Endothelial cell of umbilical vein (primary cell): ENCODE measurements at regions of chr14 and their contacts with region 1.

Region 1: DNA sequence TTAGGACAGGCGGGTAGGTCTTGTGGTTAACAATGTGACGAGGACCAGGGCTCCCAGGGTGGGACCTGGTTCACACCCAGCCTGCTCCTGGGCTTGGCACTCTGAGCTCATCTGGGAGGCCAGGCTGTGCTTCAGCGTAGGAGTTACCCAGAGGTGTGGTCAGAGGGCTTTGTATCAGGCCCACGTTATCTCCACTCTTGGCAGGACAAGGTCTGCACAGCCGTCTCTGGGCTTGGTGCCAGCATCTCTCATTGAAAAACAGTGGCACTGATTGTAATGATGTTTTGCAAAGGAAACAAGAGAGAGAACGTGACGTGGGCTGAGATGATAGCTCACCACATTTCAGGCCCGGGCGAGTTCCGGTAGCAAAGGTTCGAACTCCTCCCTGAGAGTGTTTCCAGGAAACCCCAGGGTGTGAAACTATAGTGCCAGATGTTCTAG is 227.1 kb downstream of the KTN1 start:
- DNase-seq: peak; percentile 98
- H3K4me3 ChIP-seq: no peak overlapping the region
- H3K27ac ChIP-seq: peak overlapping the region; percentile 82
- H3K4me1 ChIP-seq: peaks cover 33% of the 10 kb centered on the region
- H3K27me3 ChIP-seq: no peaks in the 10 kb centered on the region
- CTCF ChIP-seq: no peak
- POLR2A ChIP-seq: no peak

Region 2: DNA sequence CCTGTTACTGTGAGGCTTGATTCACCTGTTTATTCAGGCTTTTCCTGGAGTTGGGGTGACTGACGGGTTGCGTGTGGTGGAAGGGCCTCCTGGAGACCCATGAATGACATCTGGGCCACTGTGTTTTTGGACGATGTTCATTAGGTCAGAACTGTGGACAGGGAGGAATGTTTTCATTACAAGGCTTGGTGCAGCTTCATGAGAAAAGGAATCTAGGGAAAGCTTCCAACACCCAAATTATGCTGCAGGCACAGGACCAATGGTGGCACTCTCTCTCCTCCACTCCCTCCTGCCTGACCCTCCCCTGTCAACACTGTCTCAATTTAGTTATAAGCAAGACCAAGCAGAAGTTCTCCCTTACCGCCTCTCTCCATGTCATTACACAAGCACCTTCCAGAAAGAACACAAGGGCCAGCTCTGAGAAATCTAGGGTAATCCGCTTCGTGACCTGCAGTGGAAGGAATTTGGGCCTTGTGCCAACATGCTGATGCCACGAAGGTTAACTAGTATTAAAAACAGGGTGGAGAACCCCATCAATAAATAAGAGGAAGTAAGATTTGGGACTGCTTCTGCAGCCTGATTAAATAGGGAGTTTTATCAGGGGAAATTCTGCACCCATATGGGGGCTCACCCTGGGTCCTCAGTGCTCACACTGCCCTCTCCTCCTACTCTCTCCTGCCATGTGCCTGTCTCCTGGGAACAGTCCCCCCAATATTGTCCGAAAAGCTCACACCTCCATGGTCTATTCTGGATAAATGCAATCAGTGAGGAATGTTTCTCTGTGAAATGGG is 26.7 kb before region 1 on chr14:
- CTCF ChIA-PET with region 1: interaction called, 7 read pairs
- POLR2A ChIA-PET with region 1: no interaction called
- dilution Hi-C with region 1: no loop called
- intact Hi-C with region 1: loop called (anchors 2 kb)
- DNase-seq: peak; percentile 95
- H3K4me3 ChIP-seq: no peak overlapping the region
- H3K27ac ChIP-seq: peak overlapping the region; percentile 44
- H3K4me1 ChIP-seq: peaks cover 18% of the 10 kb centered on the region
- H3K27me3 ChIP-seq: no peaks in the 10 kb centered on the region
- CTCF ChIP-seq: no peak
- POLR2A ChIP-seq: peak; percentile 51

Region 3: GRCh38 chr14:55889124-55889523 is 82.0 kb after region 1 on chr14:
- CTCF ChIA-PET with region 1: no interaction called
- POLR2A ChIA-PET with region 1: no interaction called
- dilution Hi-C with region 1: no loop called
- intact Hi-C with region 1: no loop called
- DNase-seq: no peak
- H3K4me3 ChIP-seq: no peak overlapping the region
- H3K27ac ChIP-seq: no peak overlapping the region
- H3K4me1 ChIP-seq: no peaks in the 10 kb centered on the region
- H3K27me3 ChIP-seq: peaks cover 12 to 15% of the 10 kb centered on the region in 2 experiments
- CTCF ChIP-seq: no peak
- POLR2A ChIP-seq: no peak

Region 4: DNA sequence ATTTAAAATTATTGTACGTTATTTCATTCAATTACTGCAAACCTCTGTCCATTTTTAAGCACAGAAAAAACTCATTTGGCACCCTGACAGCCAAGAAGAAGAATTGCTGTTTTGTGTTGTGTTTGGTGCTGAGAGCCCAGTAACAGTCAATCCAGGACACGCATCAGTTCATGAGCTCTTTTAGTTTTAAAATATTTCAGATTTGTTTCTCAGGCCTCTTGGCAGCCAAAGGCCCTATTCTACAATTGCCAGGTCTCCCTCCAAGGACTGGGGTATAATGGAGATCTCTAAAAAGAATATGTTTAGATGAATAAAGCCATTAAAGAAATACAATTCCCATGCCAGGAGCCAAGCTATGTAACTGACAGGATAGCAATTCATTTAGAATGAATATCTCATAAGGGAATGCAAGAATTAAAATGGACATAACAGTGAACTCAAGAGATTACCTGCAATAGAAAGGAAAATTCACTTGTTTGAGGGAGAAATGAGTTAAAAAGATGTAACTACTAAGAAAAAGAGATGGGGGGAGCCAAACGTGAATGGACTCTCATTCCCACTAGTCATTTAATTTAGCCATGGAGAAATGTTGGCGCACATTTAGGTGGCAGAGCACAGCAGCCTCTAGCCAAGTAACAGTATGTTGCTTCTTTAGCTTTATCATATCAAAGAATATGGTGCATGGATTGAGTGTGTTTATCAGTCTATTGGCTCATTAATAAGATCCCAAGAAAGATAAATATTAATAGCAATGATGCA is 170.5 kb after region 1 on chr14:
- CTCF ChIA-PET with region 1: no interaction called
- POLR2A ChIA-PET with region 1: no interaction called
- dilution Hi-C with region 1: no loop called
- intact Hi-C with region 1: no loop called
- DNase-seq: no peak
- H3K4me3 ChIP-seq: no peak overlapping the region
- H3K27ac ChIP-seq: no peak overlapping the region
- H3K4me1 ChIP-seq: no peaks in the 10 kb centered on the region
- H3K27me3 ChIP-seq: no peaks in the 10 kb centered on the region
- CTCF ChIP-seq: no peak
- POLR2A ChIP-seq: no peak

Region 5: DNA sequence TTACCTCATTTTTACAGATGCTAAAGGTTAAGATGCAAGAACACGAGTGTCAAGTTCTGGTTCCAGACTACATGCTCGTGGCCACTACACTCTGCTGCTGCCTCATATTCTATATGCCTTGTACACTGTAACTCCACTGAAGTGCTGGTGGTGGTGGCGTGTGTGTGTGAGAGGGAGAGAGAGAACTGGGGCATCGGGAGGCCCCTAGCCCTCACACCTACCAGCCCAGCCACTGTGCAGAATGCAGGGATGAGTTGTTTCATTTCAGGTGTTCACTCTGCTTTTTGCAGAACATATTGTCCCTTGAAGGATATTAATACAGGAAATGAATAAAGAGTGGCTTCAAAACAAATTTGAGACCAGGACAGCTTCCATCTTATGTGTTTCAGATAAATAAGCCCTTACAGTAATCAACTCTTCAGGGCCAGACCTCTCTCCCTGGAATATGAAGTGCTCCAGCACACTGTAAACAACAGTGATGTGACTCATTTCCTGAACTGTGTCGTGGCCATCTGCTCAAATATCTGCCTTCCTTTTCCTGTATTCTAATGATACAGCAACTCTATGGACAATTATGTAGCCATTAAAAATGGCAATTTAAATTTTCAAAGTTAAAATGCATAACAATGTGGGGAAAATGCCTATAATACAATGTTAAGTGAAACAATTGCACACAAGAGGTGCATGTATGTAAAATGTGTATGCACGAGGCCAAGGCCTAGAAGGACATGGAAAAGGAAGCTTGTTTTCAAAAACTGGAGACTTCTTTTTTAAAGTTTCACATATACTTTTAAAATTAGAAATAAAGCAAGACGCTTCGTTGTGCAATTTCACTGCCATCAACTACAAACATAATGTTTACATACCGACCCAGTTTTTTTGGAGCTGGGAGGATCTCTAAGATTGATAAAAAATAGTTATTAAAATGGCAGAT is 526.5 kb after region 1 on chr14:
- CTCF ChIA-PET with region 1: no interaction called
- POLR2A ChIA-PET with region 1: no interaction called
- dilution Hi-C with region 1: no loop called
- intact Hi-C with region 1: loop called (anchors 1 kb)
- DNase-seq: peak; percentile 91
- H3K4me3 ChIP-seq: no peak overlapping the region
- H3K27ac ChIP-seq: peak overlapping the region; percentile 99
- H3K4me1 ChIP-seq: peaks cover 25% of the 10 kb centered on the region
- H3K27me3 ChIP-seq: no peaks in the 10 kb centered on the region
- CTCF ChIP-seq: no peak
- POLR2A ChIP-seq: peak; percentile 36